GM12878 (cell line): ENCODE measurements at regions of chrX and their contacts with region 1.

Region 1: GRCh38 chrX:131633285-131633917 is 89.5 kb downstream of the OR13H1 start:
- DNase-seq: peak; percentile 4
- ATAC-seq: peak; percentile 99
- H3K4me3 ChIP-seq: no peak overlapping the region
- H3K27ac ChIP-seq: no peak overlapping the region
- H3K4me1 ChIP-seq: no peaks in the 10 kb centered on the region
- H3K27me3 ChIP-seq: no peaks in the 10 kb centered on the region
- CTCF ChIP-seq: peak; percentile 82 to 93 (median 86)
- EP300 ChIP-seq: no peak
- POLR2A ChIP-seq: no peak
- RAD21 ChIP-seq: peak; percentile 88

Region 2: DNA sequence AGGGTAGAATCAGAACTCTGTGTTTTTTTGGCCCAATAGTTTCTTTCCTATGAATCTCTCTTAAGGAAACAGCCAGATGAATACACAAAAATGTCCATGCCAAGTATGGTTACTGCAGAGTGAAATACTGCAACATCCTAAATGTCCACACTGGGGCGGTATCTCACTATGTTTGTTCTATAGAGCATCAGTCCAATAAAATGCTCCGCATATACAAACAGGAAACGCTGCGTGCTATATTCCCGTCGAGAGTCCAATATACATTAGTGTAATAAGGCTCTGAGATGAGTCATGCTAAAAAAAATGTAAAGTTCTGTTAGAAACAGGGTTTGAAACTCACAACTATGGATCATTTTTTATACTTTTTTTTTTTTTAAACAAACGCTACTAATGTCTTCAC is 657.5 kb before region 1 on chrX:
- CTCF ChIA-PET with region 1: interaction called, 6 read pairs
- POLR2A ChIA-PET with region 1: no interaction called
- RAD21 ChIA-PET with region 1: interaction called, 3 read pairs
- SMC1A ChIA-PET with region 1: no interaction called
- in situ Hi-C with region 1: loop called (anchors 5 kb)
- intact Hi-C with region 1: no loop called
- DNase-seq: no peak
- ATAC-seq: peak; percentile 92
- H3K4me3 ChIP-seq: no peak overlapping the region
- H3K27ac ChIP-seq: no peak overlapping the region
- H3K4me1 ChIP-seq: no peaks in the 10 kb centered on the region
- H3K27me3 ChIP-seq: no peaks in the 10 kb centered on the region
- CTCF ChIP-seq: peak; percentile 60 to 69 (median 63); a peak in 5 of 6 replicates
- EP300 ChIP-seq: no peak
- POLR2A ChIP-seq: no peak
- RAD21 ChIP-seq: peak; percentile 67

Region 3: DNA sequence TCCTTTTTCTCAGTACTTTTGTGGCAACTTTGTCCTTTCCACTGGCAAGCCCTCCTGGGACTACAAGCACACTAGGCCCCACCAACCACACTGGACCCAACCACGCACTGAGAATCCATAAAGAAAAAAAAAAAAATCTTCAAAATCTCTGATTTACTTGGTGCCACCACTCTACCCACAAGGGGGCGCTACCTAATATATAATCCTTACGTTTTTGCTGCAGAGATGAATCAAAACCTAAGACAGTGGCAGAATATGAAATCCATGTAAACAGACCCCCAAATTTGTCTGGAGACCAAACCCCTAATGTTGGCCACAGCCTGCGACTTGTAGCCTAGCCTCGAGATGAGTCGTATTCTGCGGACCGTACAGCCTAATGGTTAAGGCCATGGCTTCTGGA is 638.7 kb before region 1 on chrX:
- CTCF ChIA-PET with region 1: interaction called, 7 read pairs
- POLR2A ChIA-PET with region 1: no interaction called
- RAD21 ChIA-PET with region 1: interaction called, 3 read pairs
- SMC1A ChIA-PET with region 1: no interaction called
- in situ Hi-C with region 1: no loop called
- intact Hi-C with region 1: loop called (anchors 5 kb)
- DNase-seq: no peak
- ATAC-seq: peak; percentile 41; the same call in 2 of the 3 replicates
- H3K4me3 ChIP-seq: no peak overlapping the region
- H3K27ac ChIP-seq: no peak overlapping the region
- H3K4me1 ChIP-seq: no peaks in the 10 kb centered on the region
- H3K27me3 ChIP-seq: no peaks in the 10 kb centered on the region
- CTCF ChIP-seq: peak; percentile 36 to 51 (median 47); a peak in 4 of 6 replicates
- EP300 ChIP-seq: no peak
- POLR2A ChIP-seq: no peak
- RAD21 ChIP-seq: peak; percentile 55

Region 4: DNA sequence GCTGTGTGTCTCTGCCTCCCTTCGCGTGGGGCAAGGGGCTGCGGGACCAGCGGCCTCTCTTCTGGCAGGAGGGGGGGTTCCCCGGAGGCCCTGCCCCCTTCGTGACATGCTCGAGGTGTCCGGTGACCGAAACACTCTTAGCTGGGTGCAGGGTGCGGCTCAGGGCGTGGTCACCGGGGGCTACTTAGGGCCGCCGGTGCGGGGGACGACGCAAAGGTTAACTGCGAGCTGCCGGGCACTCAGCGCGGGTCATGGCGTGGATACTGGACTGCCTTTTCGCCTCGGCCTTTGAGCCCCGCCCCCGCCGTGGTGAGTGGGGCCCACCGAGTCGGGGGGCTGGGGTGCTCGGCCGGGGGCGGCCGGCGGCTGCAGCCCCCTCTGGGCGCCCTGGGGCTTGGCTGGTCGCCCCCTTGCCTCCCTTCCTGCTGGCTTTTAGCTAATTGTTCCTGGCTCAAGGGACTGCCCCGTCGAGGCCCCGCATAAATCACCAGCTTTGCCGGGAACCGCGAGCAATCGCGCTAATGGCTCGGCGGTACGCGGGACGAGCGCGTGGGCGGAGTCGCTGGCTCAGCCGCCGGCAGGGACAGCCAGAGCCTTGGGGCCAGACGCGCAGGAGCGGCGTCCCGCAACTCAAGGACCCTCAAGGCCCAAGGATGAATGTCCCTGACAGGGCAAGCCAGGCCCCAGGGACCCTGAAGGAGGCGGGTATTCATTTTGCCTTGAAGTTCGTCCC is 575.1 kb before region 1 on chrX and contains the start of gene ARHGAP36:
- CTCF ChIA-PET with region 1: interaction called, 3 read pairs
- POLR2A ChIA-PET with region 1: no interaction called
- RAD21 ChIA-PET with region 1: no interaction called
- SMC1A ChIA-PET with region 1: no interaction called
- in situ Hi-C with region 1: no loop called
- intact Hi-C with region 1: loop called (anchors 10 kb)
- DNase-seq: no peak
- ATAC-seq: no peak
- H3K4me3 ChIP-seq: no peak within 1 kb of the TSS
- H3K27ac ChIP-seq: no peak within 1 kb of the TSS
- H3K4me1 ChIP-seq: no peaks in the 10 kb centered on the region
- H3K27me3 ChIP-seq: no peaks in the 10 kb centered on the region; a peak in 1 of 4 replicates
- CTCF ChIP-seq: no peak
- EP300 ChIP-seq: no peak
- POLR2A ChIP-seq: no peak
- RAD21 ChIP-seq: no peak
- polyA plus RNA-seq, gene ARHGAP36: not detected

Region 5: DNA sequence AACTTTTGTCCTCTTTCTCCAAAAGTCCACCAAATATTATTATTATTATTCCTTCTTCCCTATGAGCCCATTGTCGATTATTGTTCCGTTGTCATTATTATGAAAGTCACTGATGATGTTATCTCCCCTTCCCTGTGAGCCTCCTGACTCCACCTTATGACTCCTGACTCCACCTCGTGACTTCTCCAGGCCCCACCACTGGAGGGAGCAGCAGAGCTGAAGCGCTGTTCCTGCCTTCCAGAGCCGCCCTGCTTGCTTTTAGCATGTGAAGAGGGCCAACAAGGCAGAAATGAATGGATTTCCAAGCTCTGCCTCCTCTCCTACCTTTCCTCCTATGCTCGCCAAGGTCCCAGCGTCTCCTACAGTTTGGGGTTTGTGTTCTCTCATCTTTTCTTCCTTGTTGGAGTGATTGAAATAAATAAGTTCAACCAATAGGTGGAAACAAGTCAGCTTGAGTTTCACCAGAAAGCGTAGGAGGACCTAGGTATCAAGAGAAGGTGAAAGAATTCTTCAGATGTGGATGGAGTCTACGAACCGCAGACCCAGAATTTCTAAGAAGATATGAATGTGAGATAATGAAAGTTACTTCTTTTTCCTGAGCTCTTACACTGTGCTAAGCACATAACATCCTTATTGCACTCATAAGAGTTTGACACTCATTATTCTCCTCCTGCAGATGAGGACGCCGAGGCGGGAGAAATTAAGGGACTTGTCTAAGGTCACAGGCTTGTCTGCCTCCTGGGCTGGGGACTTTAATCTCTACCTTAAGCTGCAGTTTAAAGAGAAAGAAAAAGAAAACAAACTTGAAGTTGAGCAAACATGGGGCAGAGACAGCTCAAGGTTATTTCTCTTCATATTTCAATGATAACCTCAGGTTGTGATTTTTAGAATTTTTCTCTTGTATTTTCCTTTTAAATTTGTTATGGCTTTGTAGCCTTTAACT is 370.4 kb before region 1 on chrX:
- CTCF ChIA-PET with region 1: no interaction called
- POLR2A ChIA-PET with region 1: no interaction called
- RAD21 ChIA-PET with region 1: interaction called, 6 read pairs
- SMC1A ChIA-PET with region 1: no interaction called
- in situ Hi-C with region 1: no loop called
- intact Hi-C with region 1: loop called (anchors 2 kb)
- DNase-seq: no peak
- ATAC-seq: peak; percentile 83
- H3K4me3 ChIP-seq: no peak overlapping the region
- H3K27ac ChIP-seq: no peak overlapping the region
- H3K4me1 ChIP-seq: no peaks in the 10 kb centered on the region
- H3K27me3 ChIP-seq: no peaks in the 10 kb centered on the region; a peak in 2 of 4 replicates
- CTCF ChIP-seq: peak; percentile 41 to 58 (median 43)
- EP300 ChIP-seq: no peak
- POLR2A ChIP-seq: no peak
- RAD21 ChIP-seq: peak; percentile 39

Region 6: DNA sequence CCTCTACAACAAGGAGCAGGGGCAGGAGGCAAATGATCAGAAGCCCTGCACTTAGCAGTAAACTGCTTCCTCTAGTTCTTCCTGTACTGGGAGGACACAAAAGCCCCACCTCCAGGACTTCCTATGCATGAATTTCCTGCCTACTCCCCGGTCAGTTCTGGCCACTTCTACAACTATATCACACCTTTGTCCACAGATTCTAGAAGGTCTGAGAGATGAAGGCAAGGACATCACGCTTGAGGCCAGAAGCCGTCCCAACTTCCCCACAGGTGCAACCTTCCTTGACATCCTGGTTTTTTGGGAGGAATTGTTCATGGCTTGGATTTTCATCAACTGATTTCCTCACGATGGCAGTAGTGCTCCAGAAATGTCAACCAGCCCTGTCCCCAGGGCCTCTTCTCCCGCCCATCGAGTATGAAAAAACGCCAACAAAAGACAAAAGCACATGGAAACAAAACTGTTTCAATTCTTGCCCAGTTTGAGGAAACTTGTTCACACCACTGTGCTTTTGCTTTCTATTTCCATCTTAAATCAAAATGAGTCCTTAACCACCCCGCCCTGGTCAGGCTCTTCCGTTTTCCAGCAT is 183.2 kb after region 1 on chrX:
- CTCF ChIA-PET with region 1: no interaction called
- POLR2A ChIA-PET with region 1: no interaction called
- RAD21 ChIA-PET with region 1: no interaction called
- SMC1A ChIA-PET with region 1: no interaction called
- in situ Hi-C with region 1: no loop called
- intact Hi-C with region 1: no loop called
- DNase-seq: peak; percentile 90
- ATAC-seq: peak; percentile 66
- H3K4me3 ChIP-seq: peak overlapping the region; percentile 71; the same call in 1 of the 2 replicates
- H3K27ac ChIP-seq: peak overlapping the region; percentile 57
- H3K4me1 ChIP-seq: peaks cover 13% of the 10 kb centered on the region; the same call in 1 of the 2 replicates
- H3K27me3 ChIP-seq: no peaks in the 10 kb centered on the region
- CTCF ChIP-seq: peak; percentile 50 to 83 (median 61); a peak in 5 of 6 replicates
- EP300 ChIP-seq: peak; percentile 15 to 44; a peak in 1 of 4 replicates
- POLR2A ChIP-seq: no peak
- RAD21 ChIP-seq: peak; percentile 80